ENCODE measurements at regions of chr1 and their contacts with region 1.

Region 1: GRCh38 chr1:85276215-85276977 is at the start of gene BCL10:
- DNase-seq: peak; percentile 94
- ATAC-seq: peak; percentile 99
- H3K4me3 ChIP-seq: peak within 1 kb of the TSS; percentile 87 to 100 (median 89)
- H3K27ac ChIP-seq: peak within 1 kb of the TSS; percentile 83
- H3K4me1 ChIP-seq: peaks cover 61% of the 10 kb centered on the region
- H3K27me3 ChIP-seq: no peaks in the 10 kb centered on the region; a peak in 1 of 5 replicates
- CTCF ChIP-seq: no peak
- EP300 ChIP-seq: no peak
- POLR2A ChIP-seq: peak; percentile 78 to 87
- RAD21 ChIP-seq: no peak
- total RNA-seq, gene BCL10: 14.1 and 20.0 TPM in 2 replicates

Region 2: GRCh38 chr1:85240174-85240601 is 36.2 kb before region 1 on chr1:
- CTCF ChIA-PET with region 1: no interaction called
- POLR2A ChIA-PET with region 1: no interaction called
- in situ Hi-C with region 1: no loop called
- intact Hi-C with region 1: no loop called
- DNase-seq: no peak
- ATAC-seq: peak; percentile 52; the same call in 2 of the 3 replicates
- H3K4me3 ChIP-seq: no peak overlapping the region
- H3K27ac ChIP-seq: no peak overlapping the region
- H3K4me1 ChIP-seq: 0 out of 2 replicates have a peak, but pooled peaks cover 7% of the 10 kb centered on the region
- H3K27me3 ChIP-seq: no peaks in the 10 kb centered on the region
- CTCF ChIP-seq: peak; percentile 18; the same call in 1 of the 2 replicates
- EP300 ChIP-seq: no peak
- POLR2A ChIP-seq: no peak
- RAD21 ChIP-seq: no peak

Region 3: DNA sequence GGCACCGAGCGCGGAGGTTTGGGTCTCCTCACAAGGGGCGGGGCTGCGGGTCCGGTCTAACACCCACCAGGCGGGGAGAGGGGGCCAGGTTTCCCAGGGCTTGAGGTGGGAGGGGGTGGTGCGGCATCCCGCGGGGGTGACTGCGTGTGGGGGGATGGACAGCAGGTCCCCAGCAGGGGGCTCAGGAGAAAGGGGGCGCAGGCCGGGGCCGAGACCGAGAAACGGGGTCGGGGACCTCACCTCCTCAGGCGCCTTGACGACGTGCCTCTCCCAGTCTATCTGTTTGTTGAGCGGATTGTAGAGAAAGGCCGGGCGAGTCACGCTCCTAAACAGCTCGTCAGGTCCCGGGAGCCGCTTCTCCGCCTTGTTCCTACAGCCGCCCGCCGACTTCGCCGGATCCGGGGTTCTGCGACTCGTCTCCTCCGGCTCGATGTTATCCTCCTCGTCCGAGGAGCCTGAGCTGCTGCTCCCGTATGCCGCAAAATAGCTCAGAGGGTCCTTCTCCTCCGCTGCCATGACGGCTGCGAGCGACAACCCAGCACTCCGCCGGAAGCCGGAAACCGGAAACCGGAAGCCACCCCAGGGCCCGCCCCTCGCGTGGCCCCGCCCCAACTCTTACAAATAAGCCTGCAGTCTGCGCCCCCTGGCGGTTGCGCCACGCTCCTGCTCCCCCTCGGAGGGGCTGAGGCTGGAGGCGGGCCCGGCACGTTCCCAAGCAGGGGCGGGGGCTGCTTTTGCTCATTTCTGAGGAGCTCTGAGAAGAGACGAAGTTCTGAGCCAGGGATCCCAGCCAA is 17.1 kb before region 1 on chr1 and contains the start of gene C1orf52:
- CTCF ChIA-PET with region 1: no interaction called
- POLR2A ChIA-PET with region 1: interaction called, 37 read pairs
- in situ Hi-C with region 1: no loop called
- intact Hi-C with region 1: no loop called
- DNase-seq: peak; percentile 78
- ATAC-seq: peak; percentile 97
- H3K4me3 ChIP-seq: peak within 1 kb of the TSS; percentile 93 to 100 (median 99)
- H3K27ac ChIP-seq: peak within 1 kb of the TSS; percentile 73
- H3K4me1 ChIP-seq: peaks cover 40% of the 10 kb centered on the region
- H3K27me3 ChIP-seq: no peaks in the 10 kb centered on the region; a peak in 1 of 5 replicates
- CTCF ChIP-seq: peak; percentile 92
- EP300 ChIP-seq: 0 out of 4 replicates have a peak, but pooled peaks of 1 of the 2 experiments have one; percentile 40
- POLR2A ChIP-seq: peak; percentile 87 to 91
- RAD21 ChIP-seq: peak; percentile 71
- total RNA-seq, gene C1orf52: 19.4 and 23.0 TPM in 2 replicates

Region 4: GRCh38 chr1:85328713-85329376 is 52.4 kb after region 1 on chr1:
- CTCF ChIA-PET with region 1: no interaction called
- POLR2A ChIA-PET with region 1: no interaction called
- in situ Hi-C with region 1: no loop called
- intact Hi-C with region 1: loop called (anchors 2 kb)
- DNase-seq: peak; percentile 97
- ATAC-seq: peak; percentile 97
- H3K4me3 ChIP-seq: no peak overlapping the region
- H3K27ac ChIP-seq: peak overlapping the region; percentile 83
- H3K4me1 ChIP-seq: peaks cover 62% of the 10 kb centered on the region
- H3K27me3 ChIP-seq: no peaks in the 10 kb centered on the region
- CTCF ChIP-seq: no peak
- EP300 ChIP-seq: peak; percentile 27 to 95; a peak in 2 of 4 replicates
- POLR2A ChIP-seq: no peak
- RAD21 ChIP-seq: no peak

Measured in HepG2 (cell line).